Activated CD4-positive, alpha-beta T cell treated with anti-CD3 and anti-CD28 coated beads, Interleukin-2, amount 10 ng/mL, durations not matched to agents 24 days and 14 days (primary cell): ENCODE measurements at regions of chr1 and their contacts with region 1.

Region 1: GRCh38 chr1:111592389-111593361 is 26.9 kb upstream of the RAP1A start:
- DNase-seq: peak; percentile 93
- H3K4me3 Mint-ChIP-seq: peak overlapping the region; percentile 53
- H3K27ac Mint-ChIP-seq: peak overlapping the region; percentile 94
- H3K4me1 Mint-ChIP-seq: peaks cover 68% of the 10 kb centered on the region
- H3K27me3 Mint-ChIP-seq: peaks cover 3% of the 10 kb centered on the region

Region 2: DNA sequence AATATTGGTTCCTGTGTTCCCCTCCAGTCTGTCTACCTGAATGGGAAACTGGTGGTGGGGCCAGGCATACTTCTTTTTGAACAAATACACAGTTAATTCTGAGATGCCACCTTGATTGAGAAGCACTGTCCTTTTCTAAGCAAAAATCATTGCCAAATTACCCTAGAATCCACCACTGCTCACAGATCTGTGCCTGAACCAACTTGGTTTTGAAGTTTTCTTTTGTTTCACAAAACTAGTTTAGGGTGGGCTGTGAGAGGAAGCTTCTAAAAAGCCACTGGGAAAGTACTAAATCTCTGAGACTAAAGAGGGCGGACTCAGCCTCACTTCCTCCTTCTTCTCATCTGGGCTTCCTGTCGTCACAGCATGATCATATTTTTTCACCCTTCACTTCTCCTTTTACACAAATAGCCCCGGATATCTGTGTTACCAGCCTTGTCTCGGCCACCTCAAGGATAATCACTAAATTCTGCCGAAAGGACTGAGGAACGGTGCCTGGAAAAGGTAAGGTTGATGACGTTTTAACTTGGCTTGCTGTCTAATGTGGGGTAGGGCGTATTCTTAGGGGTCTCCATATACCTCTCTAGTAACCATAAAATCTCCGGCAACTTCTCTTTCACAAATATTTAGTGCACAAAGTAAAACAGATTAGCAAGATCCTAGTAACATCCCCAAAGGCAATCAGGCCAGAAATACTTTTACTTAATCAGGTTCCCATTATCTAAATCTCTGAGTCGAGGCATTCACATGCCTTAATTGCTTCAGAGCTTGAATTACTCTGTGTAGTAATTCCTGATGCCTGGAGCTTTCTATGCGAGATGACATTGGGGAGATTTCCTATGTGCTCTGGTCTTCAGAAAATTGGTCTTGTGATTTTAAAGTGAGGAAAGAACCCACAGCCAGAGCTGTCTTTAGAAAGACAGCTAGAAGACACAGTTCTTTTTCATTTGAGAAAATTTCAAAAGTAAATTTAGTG is 719.6 kb before region 1 on chr1 and contains the start of gene CD53:
- intact Hi-C with region 1: loop called (anchors 10 kb)
- DNase-seq: peak; percentile 87
- H3K4me3 Mint-ChIP-seq: peak within 1 kb of the TSS; percentile 98
- H3K27ac Mint-ChIP-seq: peak within 1 kb of the TSS; percentile 97
- H3K4me1 Mint-ChIP-seq: peaks cover 34% of the 10 kb centered on the region
- H3K27me3 Mint-ChIP-seq: no peaks in the 10 kb centered on the region
- total RNA-seq, gene CD53: 185 and 190 TPM in 2 replicates

Region 3: DNA sequence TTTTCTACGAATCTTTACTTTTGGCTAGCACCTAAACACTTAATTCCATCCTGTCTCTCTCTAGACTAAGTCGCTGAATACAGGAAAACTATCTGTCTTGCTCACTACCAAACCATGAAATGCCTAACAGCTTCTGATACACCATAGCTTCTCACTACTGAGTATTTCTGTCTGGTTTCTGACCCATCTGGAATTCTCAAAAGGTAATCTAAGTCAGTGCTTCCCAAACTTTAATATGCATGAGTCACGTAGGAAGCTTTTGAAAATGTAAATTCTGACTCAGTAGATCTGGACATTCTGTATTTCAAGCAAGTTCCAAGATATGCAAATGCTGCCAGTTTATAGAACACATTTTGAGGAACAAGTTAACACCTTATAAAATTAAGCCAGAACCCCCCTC is 155.9 kb before region 1 on chr1:
- intact Hi-C with region 1: no loop called
- DNase-seq: no peak
- H3K4me3 Mint-ChIP-seq: no peak overlapping the region
- H3K27ac Mint-ChIP-seq: no peak overlapping the region
- H3K4me1 Mint-ChIP-seq: peaks cover 3% of the 10 kb centered on the region
- H3K27me3 Mint-ChIP-seq: peaks cover 3% of the 10 kb centered on the region

Region 4: DNA sequence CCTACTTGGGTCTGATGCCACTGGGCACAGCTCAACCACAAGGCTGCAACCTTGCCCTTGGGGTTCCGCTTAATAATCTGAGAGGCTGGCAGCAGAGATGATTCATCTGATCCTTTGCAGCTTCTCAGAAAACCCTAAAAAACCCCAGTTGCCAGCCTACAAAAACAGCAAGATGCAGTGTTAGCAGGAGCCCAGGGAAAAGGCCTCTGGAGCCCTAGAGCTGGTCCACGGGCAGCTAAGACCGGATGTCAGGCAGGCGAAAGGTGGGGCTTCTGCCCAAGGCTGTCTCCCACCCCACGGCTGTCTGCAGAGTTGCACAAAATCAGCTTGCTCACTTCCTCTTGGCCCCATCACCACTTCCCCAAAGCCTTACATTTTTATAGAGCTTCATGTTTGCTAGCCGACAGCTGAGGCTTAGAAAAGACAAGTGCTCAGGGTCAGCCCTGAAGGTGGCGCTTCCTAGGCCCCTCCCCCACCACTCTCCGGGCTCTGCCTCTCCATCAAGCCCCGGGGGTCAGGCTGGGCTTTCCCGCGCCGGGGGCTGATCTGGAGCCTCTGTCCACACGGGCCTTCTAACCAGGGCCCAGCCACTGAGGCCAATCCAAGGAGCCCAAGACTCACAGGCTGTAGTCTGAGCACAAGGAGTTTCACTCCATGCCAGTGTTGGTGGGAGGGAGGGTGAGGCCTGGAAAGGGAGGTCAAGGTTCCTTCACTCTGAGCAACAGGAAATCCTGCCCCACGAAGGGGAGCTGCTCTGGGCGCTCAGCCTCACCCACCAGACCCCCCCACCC is 85.1 kb before region 1 on chr1:
- intact Hi-C with region 1: loop called (anchors 1 kb)
- DNase-seq: peak; percentile 88
- H3K4me3 Mint-ChIP-seq: peak overlapping the region; percentile 79
- H3K27ac Mint-ChIP-seq: peak overlapping the region; percentile 94
- H3K4me1 Mint-ChIP-seq: peaks cover 66% of the 10 kb centered on the region
- H3K27me3 Mint-ChIP-seq: no peaks in the 10 kb centered on the region

Region 5: GRCh38 chr1:111603979-111604378 is 11.3 kb after region 1 on chr1:
- intact Hi-C with region 1: loop called (anchors 1 kb)
- DNase-seq: peak; percentile 94
- H3K4me3 Mint-ChIP-seq: peak overlapping the region; percentile 87
- H3K27ac Mint-ChIP-seq: peak overlapping the region; percentile 98
- H3K4me1 Mint-ChIP-seq: peaks cover 66% of the 10 kb centered on the region
- H3K27me3 Mint-ChIP-seq: no peaks in the 10 kb centered on the region

Region 6: GRCh38 chr1:111628153-111628552 is 35.5 kb after region 1 on chr1:
- intact Hi-C with region 1: loop called (anchors 1 kb)
- DNase-seq: no peak
- H3K4me3 Mint-ChIP-seq: peak overlapping the region; percentile 73
- H3K27ac Mint-ChIP-seq: peak overlapping the region; percentile 89
- H3K4me1 Mint-ChIP-seq: peaks cover 70% of the 10 kb centered on the region
- H3K27me3 Mint-ChIP-seq: no peaks in the 10 kb centered on the region